AG04450 (cell line): ENCODE measurements at regions of chr5 and their contacts with region 1.

Region 1: DNA sequence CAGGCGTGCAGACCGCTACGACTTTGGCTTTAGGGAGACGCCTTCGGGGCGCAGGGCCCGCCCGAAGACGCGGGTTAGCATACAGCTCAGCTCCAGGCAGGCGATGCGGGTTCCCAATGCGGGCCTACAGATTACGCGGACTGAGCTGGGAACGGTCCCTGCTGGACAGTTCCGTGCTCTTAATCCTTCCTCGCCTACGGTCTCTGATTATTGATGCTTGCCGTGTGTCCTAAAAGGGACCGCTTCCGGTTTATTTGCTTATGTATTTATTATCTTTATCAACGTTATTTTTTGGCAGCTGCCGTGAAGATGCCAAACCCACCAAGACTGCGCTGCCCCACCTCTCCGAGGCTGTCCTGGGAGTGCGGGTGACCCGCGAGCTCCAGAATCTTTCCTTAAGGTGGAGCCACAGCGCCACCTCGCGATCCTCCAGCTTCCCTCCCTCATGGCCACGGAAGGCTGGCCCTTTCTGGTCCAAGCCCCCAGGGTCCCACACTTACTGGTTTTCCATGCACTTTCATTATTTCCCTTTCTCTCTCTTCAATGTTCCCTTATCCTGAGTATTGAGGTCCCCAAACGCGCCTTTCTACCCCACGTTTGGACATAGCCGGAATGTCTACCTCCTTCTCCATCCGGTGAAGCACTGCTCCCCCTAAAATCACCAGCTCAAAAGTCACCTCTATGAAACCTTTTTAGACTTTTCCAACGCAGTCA is 7.0 kb upstream of the EBF1 start:
- DNase-seq: no peak
- H3K4me3 ChIP-seq: peak overlapping the region; percentile 15
- H3K27ac ChIP-seq: no peak overlapping the region
- H3K27me3 ChIP-seq: peaks cover 57% of the 10 kb centered on the region
- CTCF ChIP-seq: peak; percentile 94

Region 2: DNA sequence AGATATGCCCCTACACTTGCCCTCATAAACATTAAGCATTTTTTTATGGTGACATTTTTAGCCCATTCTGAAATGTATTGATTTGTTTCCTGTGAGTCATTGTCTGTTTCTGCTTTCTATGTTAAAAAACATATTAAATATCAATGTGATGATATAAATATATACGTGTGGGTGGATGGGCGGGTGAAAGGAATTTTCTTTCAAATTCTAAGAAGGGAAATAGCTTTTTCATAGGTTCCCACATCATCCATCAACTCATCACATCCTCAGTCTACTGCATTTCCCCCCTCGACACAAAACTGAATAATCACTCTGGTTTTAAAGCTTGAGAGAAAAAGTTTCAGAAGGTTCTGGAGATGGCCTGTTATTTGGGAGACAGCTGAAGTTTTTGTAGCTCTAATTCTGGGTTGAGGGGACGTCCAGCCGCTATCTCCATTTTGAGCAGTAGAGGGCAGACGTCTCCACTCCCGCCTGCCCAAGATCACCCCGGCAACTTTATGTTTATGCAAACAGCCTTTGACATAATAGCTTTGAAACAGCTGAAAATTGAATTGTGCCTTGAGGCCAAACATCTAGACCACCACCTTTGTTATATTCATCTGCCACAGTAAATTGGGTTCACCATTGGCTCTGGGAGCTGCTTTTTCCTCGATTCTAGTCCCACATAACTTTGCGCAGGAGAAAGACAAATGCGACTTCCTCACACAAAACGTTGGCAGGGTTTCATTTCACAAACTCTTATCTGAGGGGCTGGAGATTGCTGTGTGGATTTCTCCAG is 1031.5 kb before region 1 on chr5:
- CTCF ChIA-PET with region 1: interaction called, 39 read pairs
- POLR2A ChIA-PET with region 1: no interaction called
- DNase-seq: peak; percentile 11
- H3K4me3 ChIP-seq: peak overlapping the region; percentile 1; the same call in 1 of the 2 replicates
- H3K27ac ChIP-seq: no peak overlapping the region
- H3K27me3 ChIP-seq: no peaks in the 10 kb centered on the region
- CTCF ChIP-seq: peak; percentile 95

Region 3: GRCh38 chr5:158695595-158696330 is 411.0 kb before region 1 on chr5:
- CTCF ChIA-PET with region 1: interaction called, 370 read pairs
- POLR2A ChIA-PET with region 1: interaction called, 5 read pairs
- DNase-seq: peak; percentile 16
- H3K4me3 ChIP-seq: no peak overlapping the region
- H3K27ac ChIP-seq: no peak overlapping the region
- H3K27me3 ChIP-seq: no peaks in the 10 kb centered on the region
- CTCF ChIP-seq: peak; percentile 97

Region 4: DNA sequence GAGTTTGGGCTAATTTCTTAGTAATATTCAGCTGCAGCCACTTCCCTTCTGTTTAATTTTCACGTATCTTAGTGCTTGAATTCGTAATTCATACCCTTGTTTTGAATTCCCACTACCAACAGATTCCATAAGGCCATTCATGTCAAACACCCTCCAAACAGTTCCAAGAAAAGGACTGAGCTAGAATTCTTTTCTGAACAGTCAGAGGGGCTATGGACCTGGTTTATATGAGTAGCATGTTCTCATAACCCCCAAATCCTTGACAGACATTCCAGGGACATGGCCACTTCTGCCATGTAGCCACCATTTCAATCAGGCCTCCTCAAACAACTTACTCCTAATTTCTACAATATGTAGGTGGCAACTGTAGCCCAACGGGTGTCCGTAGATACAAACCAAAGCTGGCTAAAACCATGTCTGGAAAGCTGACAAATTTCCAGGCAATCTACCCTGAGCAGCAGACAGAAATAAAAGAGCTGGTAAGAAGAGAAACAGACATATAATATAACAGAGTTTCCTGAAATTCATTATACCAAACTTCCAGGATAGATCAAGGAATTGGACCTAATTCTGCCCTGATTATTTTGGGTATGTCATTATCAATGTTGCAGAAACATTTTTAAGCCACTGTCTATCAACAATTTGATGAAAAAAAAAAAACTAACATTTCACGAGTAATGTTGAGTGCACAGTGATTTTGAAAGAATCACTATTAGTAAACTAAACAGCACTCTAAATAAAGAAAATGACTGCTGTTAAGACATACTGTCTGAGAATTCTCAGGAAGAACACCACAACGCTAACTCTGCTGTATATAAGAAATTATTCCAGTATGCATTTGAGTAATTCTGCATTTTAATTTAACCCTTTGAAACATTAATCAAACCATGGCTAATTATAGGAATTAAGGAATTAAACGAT is 47.8 kb before region 1 on chr5:
- CTCF ChIA-PET with region 1: interaction called, 15 read pairs
- POLR2A ChIA-PET with region 1: no interaction called
- DNase-seq: no peak
- H3K4me3 ChIP-seq: no peak overlapping the region
- H3K27ac ChIP-seq: no peak overlapping the region
- H3K27me3 ChIP-seq: no peaks in the 10 kb centered on the region
- CTCF ChIP-seq: no peak

Region 5: GRCh38 chr5:159123700-159124099 is 17.0 kb after region 1 on chr5:
- CTCF ChIA-PET with region 1: interaction called, 11 read pairs
- POLR2A ChIA-PET with region 1: no interaction called
- DNase-seq: no peak
- H3K4me3 ChIP-seq: no peak overlapping the region
- H3K27ac ChIP-seq: no peak overlapping the region
- H3K27me3 ChIP-seq: peaks cover 8% of the 10 kb centered on the region
- CTCF ChIP-seq: no peak

Region 6: GRCh38 chr5:159497221-159497620 is 390.5 kb after region 1 on chr5:
- CTCF ChIA-PET with region 1: no interaction called
- POLR2A ChIA-PET with region 1: no interaction called
- DNase-seq: no peak
- H3K4me3 ChIP-seq: no peak overlapping the region
- H3K27ac ChIP-seq: no peak overlapping the region
- H3K27me3 ChIP-seq: peaks cover 7% of the 10 kb centered on the region
- CTCF ChIP-seq: no peak